GM12878 (cell line): ENCODE measurements at regions of chr1 and their contacts with region 1.

Region 1: GRCh38 chr1:110460253-110461220 is 9.6 kb downstream of the PROK1 start:
- DNase-seq: peak; percentile 38
- ATAC-seq: peak; percentile 96
- H3K4me3 ChIP-seq: no peak overlapping the region
- H3K27ac ChIP-seq: no peak overlapping the region
- H3K4me1 ChIP-seq: no peaks in the 10 kb centered on the region
- H3K27me3 ChIP-seq: no peaks in the 10 kb centered on the region
- CTCF ChIP-seq: peak; percentile 92 to 98 (median 97)
- EP300 ChIP-seq: no peak
- POLR2A ChIP-seq: no peak
- RAD21 ChIP-seq: peak; percentile 100

Region 2: GRCh38 chr1:110087812-110088738 is 372.5 kb before region 1 on chr1:
- CTCF ChIA-PET with region 1: interaction called, 11 read pairs
- POLR2A ChIA-PET with region 1: no interaction called
- RAD21 ChIA-PET with region 1: interaction called, 5 read pairs
- SMC1A ChIA-PET with region 1: interaction called, 6 read pairs
- in situ Hi-C with region 1: no loop called
- intact Hi-C with region 1: loop called (anchors 10 kb)
- DNase-seq: no peak
- ATAC-seq: peak; percentile 89
- H3K4me3 ChIP-seq: no peak overlapping the region
- H3K27ac ChIP-seq: no peak overlapping the region
- H3K4me1 ChIP-seq: peaks cover 5% of the 10 kb centered on the region; the same call in 1 of the 2 replicates
- H3K27me3 ChIP-seq: peaks cover 5 to 8% of the 10 kb centered on the region in 2 experiments; a peak in 2 of 4 replicates
- CTCF ChIP-seq: peak; percentile 61 to 74 (median 67)
- EP300 ChIP-seq: no peak
- POLR2A ChIP-seq: no peak
- RAD21 ChIP-seq: peak; percentile 71

Region 3: DNA sequence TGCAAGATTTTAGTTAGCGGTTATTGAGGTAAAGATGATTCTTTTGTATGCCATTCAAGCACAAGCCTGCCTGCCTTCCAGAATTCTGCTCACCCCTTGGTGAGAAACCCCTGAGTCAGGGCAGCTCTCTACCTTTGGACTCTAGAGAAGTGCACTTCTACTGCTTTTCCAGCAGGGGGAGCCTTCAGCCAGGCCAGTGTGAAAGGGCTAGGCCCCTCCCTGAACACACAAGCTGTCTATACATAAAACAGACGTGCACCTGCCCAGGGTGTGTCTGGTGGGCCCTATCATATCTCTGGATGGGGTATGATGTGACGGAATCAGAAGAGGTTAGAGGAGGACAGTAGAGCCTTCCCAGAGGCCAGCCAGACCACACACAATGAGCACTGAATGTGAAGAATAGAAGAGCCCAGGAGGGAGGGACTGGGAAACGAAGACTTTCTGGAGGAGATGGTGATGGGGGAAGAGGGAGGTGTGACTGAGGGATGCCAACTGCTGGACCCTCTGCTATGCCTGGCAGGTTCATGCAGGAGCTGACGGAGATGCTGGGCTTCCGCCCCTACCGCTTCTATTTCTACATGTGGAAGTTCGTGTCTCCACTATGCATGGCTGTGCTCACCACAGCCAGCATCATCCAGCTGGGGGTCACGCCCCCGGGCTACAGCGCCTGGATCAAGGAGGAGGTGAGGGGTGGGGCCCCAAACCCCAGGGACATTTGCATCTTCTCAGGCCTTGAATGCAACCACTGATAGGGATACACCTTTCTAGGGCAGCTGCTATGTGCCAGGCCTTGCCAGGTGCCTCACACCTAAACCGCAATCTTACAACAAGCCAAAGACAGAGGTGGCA is 263.4 kb before region 1 on chr1:
- CTCF ChIA-PET with region 1: interaction called, 122 read pairs
- POLR2A ChIA-PET with region 1: no interaction called
- RAD21 ChIA-PET with region 1: interaction called, 71 read pairs
- SMC1A ChIA-PET with region 1: interaction called, 46 read pairs
- in situ Hi-C with region 1: loop called (anchors 5 kb)
- intact Hi-C with region 1: no loop called
- DNase-seq: no peak
- ATAC-seq: peak; percentile 98
- H3K4me3 ChIP-seq: no peak overlapping the region
- H3K27ac ChIP-seq: no peak overlapping the region
- H3K4me1 ChIP-seq: no peaks in the 10 kb centered on the region
- H3K27me3 ChIP-seq: peaks cover 0 to 2% of the 10 kb centered on the region in 2 experiments; a peak in 2 of 4 replicates
- CTCF ChIP-seq: peak; percentile 87 to 92 (median 91)
- EP300 ChIP-seq: no peak
- POLR2A ChIP-seq: no peak
- RAD21 ChIP-seq: peak; percentile 61

Region 4: GRCh38 chr1:110312188-110313121 is 148.1 kb before region 1 on chr1:
- CTCF ChIA-PET with region 1: interaction called, 16 read pairs
- POLR2A ChIA-PET with region 1: no interaction called
- RAD21 ChIA-PET with region 1: interaction called, 9 read pairs
- SMC1A ChIA-PET with region 1: interaction called, 11 read pairs
- in situ Hi-C with region 1: no loop called
- intact Hi-C with region 1: loop called (anchors 2 kb)
- DNase-seq: peak; percentile 19
- ATAC-seq: peak; percentile 100
- H3K4me3 ChIP-seq: no peak overlapping the region
- H3K27ac ChIP-seq: no peak overlapping the region
- H3K4me1 ChIP-seq: no peaks in the 10 kb centered on the region
- H3K27me3 ChIP-seq: no peaks in the 10 kb centered on the region
- CTCF ChIP-seq: peak; percentile 93
- EP300 ChIP-seq: no peak
- POLR2A ChIP-seq: no peak
- RAD21 ChIP-seq: peak; percentile 97

Region 5: GRCh38 chr1:110338886-110339406 is 121.6 kb before region 1 on chr1 and contains the start of gene RBM15:
- CTCF ChIA-PET with region 1: interaction called, 33 read pairs
- POLR2A ChIA-PET with region 1: no interaction called
- RAD21 ChIA-PET with region 1: interaction called, 10 read pairs
- SMC1A ChIA-PET with region 1: interaction called, 9 read pairs
- in situ Hi-C with region 1: no loop called
- intact Hi-C with region 1: no loop called
- DNase-seq: peak; percentile 100
- ATAC-seq: peak; percentile 81
- H3K4me3 ChIP-seq: peak within 1 kb of the TSS; percentile 91
- H3K27ac ChIP-seq: peak within 1 kb of the TSS; percentile 97
- H3K4me1 ChIP-seq: peaks cover 5% of the 10 kb centered on the region
- H3K27me3 ChIP-seq: no peaks in the 10 kb centered on the region
- CTCF ChIP-seq: no peak
- EP300 ChIP-seq: peak in 1 of 2 experiments; percentile 45; a peak in 2 of 4 replicates
- POLR2A ChIP-seq: no peak
- RAD21 ChIP-seq: no peak
- polyA plus RNA-seq, gene RBM15: 3.1 to 3.6 TPM

Region 6: GRCh38 chr1:110407260-110408210 is 53.0 kb before region 1 on chr1 and contains the start of gene LAMTOR5:
- CTCF ChIA-PET with region 1: interaction called, 146 read pairs
- POLR2A ChIA-PET with region 1: interaction called, 3 read pairs
- RAD21 ChIA-PET with region 1: interaction called, 28 read pairs
- SMC1A ChIA-PET with region 1: interaction called, 61 read pairs
- in situ Hi-C with region 1: no loop called
- intact Hi-C with region 1: loop called (anchors 1 kb)
- DNase-seq: peak; percentile 86
- ATAC-seq: peak; percentile 94
- H3K4me3 ChIP-seq: peak within 1 kb of the TSS; percentile 99
- H3K27ac ChIP-seq: peak within 1 kb of the TSS; percentile 85
- H3K4me1 ChIP-seq: peaks cover 10% of the 10 kb centered on the region
- H3K27me3 ChIP-seq: no peaks in the 10 kb centered on the region
- CTCF ChIP-seq: peak in 2 of 3 experiments; percentile 12 to 14; a peak in 2 of 6 replicates
- EP300 ChIP-seq: peak; percentile 22 to 49; a peak in 2 of 4 replicates
- POLR2A ChIP-seq: peak; percentile 97
- RAD21 ChIP-seq: peak; percentile 35; the same call in 1 of the 2 replicates
- polyA plus RNA-seq, gene LAMTOR5: 474 to 613 TPM

Region 7: GRCh38 chr1:110674337-110675059 is 214.0 kb after region 1 on chr1 and contains the start of gene KCNA3:
- CTCF ChIA-PET with region 1: no interaction called
- POLR2A ChIA-PET with region 1: no interaction called
- RAD21 ChIA-PET with region 1: no interaction called
- SMC1A ChIA-PET with region 1: no interaction called
- in situ Hi-C with region 1: no loop called
- intact Hi-C with region 1: no loop called
- DNase-seq: no peak
- ATAC-seq: peak; percentile 71
- H3K4me3 ChIP-seq: peak within 1 kb of the TSS; percentile 64
- H3K27ac ChIP-seq: no peak within 1 kb of the TSS
- H3K4me1 ChIP-seq: peaks cover 29% of the 10 kb centered on the region
- H3K27me3 ChIP-seq: peaks cover 0 to 4% of the 10 kb centered on the region in 2 experiments; a peak in 2 of 4 replicates
- CTCF ChIP-seq: no peak; a peak in 2 of 6 replicates
- EP300 ChIP-seq: no peak
- POLR2A ChIP-seq: peak; percentile 48; the same call in 1 of the 2 replicates
- RAD21 ChIP-seq: no peak
- polyA plus RNA-seq, gene KCNA3: 0.10 to 0.26 TPM